ENCODE measurements at regions of chr1 and their contacts with region 1.

Region 1: DNA sequence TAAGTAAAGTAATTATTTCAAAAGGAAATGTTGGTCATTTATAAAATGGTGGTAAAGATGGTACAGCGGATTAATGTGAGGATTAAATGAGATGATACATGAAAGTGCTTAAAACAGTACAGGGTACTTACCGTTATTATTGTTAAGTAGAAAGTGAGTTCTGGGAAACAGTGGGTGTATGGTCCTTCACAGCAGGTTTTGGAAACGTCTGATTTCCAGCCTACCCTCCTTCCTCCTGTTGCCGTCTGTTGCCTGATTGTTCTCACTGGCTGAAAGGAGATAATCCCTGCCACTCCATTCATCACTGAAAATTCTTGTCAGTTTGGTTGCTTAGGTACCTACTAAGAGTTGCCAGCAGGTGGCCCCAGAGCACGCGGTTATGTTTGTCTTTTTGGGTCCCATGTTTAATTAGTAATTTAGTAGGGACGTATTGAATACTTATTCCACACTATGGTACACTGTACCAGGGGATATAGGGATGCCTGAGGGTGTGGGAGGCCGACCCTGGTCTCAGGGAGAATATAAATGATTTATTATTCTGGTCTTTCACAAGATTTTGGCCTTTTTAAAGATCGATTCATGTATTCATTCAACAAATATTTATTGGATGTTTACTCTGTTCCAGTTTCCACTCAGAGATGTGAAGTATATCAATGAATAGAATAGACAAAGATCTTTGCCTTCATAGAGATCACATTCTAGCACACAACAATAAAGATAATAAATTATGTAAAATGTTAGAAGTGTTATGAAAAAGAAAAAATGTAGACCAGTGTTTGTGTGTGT is 30.8 kb upstream of the RPTN start:
- DNase-seq: no peak
- ATAC-seq: peak in 1 of 2 donors; percentile 16
- H3K4me3 ChIP-seq: peak overlapping the region; percentile 50 to 59 (median 56)
- H3K27ac ChIP-seq: no peak overlapping the region
- H3K4me1 ChIP-seq: no peaks in the 10 kb centered on the region
- H3K27me3 ChIP-seq: peaks cover 0 to 13% (median 6%) of the 10 kb centered on the region in 3 donors
- CTCF ChIP-seq: peak; percentile 17 to 57 (median 38)
- POLR2A ChIP-seq: no peak

Region 2: GRCh38 chr1:152440635-152441471 is 251.0 kb after region 1 on chr1:
- in situ Hi-C with region 1: loop called in 1 of 4 experiments (anchors 10 kb)
- intact Hi-C with region 1: loop called (anchors 2 kb)
- DNase-seq: peak; percentile 16 to 29
- ATAC-seq: peak; percentile 56 to 60
- H3K4me3 ChIP-seq: no peak overlapping the region
- H3K27ac ChIP-seq: no peak overlapping the region
- H3K4me1 ChIP-seq: no peaks in the 10 kb centered on the region
- H3K27me3 ChIP-seq: peaks cover 0 to 2% (median 0%) of the 10 kb centered on the region in 3 donors
- CTCF ChIP-seq: peak; percentile 26 to 71 (median 54)
- POLR2A ChIP-seq: no peak

Region 3: GRCh38 chr1:152459596-152460528 is 270.0 kb after region 1 on chr1:
- in situ Hi-C with region 1: loop called in 3 of 4 experiments (anchors 5 to 25 kb)
- intact Hi-C with region 1: loop called (anchors 2 kb)
- DNase-seq: no peak
- ATAC-seq: no peak
- H3K4me3 ChIP-seq: peak overlapping the region in 2 of 4 donors; percentile 10 to 19
- H3K27ac ChIP-seq: peak overlapping the region in 1 of 4 donors; percentile 2
- H3K4me1 ChIP-seq: no peaks in the 10 kb centered on the region
- H3K27me3 ChIP-seq: no peaks in the 10 kb centered on the region
- CTCF ChIP-seq: peak in 4 of 5 experiments; percentile 18 to 62 (median 52)
- POLR2A ChIP-seq: no peak